Panc1 (cell line): ENCODE measurements at regions of chr9 and their contacts with region 1.

Region 1: DNA sequence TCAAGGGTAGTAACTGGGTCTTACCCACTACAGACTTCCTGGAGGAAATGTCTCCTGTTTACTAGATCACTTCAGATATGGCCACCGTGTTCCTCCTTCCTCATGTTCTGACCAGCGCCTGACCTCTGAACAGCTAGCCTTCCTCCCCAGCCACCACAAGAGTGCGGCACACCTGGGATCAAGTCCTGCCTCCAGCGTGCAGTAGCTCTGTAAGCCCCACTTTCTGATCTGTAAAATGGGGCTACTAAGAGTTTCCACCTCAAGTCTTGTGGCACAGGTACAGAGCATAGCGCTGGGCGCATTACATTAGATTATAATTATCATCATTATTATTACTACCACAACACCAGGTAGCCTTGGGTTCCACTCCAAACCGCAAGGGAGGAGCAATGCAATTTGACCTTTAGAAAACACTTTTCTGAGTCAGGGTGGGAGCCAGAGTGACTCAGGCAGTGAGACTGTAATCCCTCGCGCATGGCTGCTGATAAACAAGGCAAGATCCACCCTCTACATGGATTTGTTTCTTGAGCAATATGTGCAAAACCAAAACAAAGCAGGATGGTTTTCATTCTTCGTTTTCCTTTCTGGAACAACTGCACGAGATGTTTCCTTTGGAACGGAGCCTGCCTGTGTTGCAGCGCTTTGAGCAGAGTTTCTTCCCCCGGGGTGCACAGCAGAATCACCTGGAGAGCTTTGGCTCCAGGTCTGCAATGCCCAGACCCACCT is 65.0 kb upstream of the ANGPTL2 start:
- DNase-seq: no peak
- ATAC-seq: no peak
- H3K4me3 ChIP-seq: no peak overlapping the region
- H3K27ac ChIP-seq: no peak overlapping the region
- H3K4me1 ChIP-seq: no peaks in the 10 kb centered on the region
- H3K27me3 ChIP-seq: no peaks in the 10 kb centered on the region
- CTCF ChIP-seq: no peak

Region 2: DNA sequence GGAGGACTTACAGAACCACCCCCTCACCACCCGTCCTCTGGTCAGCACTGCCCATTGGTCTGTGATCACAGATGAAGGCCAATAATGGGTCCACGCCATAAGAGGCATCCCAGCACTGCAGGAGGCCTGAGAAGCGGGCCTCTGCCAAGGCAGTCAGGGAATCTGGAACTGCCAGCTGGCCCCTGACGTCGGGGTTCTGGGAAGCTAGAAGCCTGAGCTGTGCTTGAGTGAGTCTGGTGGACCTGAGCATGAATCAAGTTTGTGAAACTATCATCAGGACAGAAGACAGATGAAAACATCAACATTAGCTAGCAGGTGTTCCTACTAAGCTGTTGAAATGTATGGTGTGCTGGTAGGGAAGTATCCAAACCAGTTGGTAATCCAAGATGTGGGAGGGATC is 72.8 kb before region 1 on chr9:
- CTCF ChIA-PET with region 1: no interaction called
- POLR2A ChIA-PET with region 1: interaction called, 10 read pairs
- in situ Hi-C with region 1: no loop called
- intact Hi-C with region 1: no loop called
- DNase-seq: no peak
- ATAC-seq: no peak
- H3K4me3 ChIP-seq: no peak overlapping the region
- H3K27ac ChIP-seq: no peak overlapping the region
- H3K4me1 ChIP-seq: no peaks in the 10 kb centered on the region; the same call in 1 of the 2 replicates
- H3K27me3 ChIP-seq: no peaks in the 10 kb centered on the region
- CTCF ChIP-seq: no peak